ENCODE measurements at regions of chr13 and their contacts with region 1.

Region 1: DNA sequence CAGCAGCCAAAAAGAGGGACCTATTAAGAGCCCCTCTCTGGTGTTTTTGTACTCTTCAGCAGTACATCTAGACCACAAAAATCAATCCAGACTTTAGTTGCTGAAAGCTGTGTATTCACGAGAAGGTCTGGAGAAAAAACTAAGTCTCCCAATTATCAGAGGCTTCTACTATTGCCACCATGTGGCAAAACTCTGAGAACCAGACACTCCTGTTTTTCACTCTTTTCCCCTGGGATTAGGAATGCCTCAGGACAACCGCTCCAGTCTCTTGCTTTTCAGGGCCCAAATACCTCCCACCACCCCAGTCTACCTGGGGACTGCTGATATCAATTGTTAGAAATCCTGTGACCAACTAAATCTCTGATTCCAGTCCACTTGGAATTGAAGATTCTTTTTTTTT is 30.1 kb upstream of the OBI1 start:
- DNase-seq: no peak
- ATAC-seq: no peak

Region 2: DNA sequence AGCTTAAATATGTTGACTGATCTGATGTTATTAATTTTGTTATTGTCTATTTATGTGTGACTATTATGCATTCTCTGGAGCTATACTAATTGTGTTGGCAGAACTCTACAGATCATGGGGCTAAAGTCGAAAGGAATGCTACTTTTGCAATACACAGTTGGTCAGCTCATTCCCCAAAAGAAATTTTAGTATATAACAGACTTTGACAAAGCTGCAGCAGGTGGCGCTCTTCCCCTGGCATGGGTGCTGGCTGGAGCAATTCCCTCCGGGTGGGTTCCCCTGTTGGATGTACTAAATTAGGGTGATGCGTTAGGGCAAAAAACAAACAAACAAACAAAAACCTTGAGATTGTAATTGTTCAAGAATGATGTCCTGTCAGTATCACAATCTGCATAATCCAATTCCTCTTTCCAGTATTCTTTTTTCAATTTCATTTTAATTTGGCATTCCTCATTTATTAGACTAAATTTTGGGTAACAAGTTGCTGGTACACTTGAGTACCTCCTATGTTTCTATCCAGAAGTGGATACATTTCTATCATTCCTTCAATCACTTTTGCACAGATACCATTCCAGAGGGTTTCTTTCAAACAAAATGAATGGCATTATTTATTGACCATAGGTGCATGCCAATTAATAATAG is 447.6 kb before region 1 on chr13:
- intact Hi-C with region 1: loop called (anchors 10 kb)
- DNase-seq: peak; percentile 40
- ATAC-seq: no peak